ENCODE measurements at regions of chr5 and their contacts with region 1.

Region 1: DNA sequence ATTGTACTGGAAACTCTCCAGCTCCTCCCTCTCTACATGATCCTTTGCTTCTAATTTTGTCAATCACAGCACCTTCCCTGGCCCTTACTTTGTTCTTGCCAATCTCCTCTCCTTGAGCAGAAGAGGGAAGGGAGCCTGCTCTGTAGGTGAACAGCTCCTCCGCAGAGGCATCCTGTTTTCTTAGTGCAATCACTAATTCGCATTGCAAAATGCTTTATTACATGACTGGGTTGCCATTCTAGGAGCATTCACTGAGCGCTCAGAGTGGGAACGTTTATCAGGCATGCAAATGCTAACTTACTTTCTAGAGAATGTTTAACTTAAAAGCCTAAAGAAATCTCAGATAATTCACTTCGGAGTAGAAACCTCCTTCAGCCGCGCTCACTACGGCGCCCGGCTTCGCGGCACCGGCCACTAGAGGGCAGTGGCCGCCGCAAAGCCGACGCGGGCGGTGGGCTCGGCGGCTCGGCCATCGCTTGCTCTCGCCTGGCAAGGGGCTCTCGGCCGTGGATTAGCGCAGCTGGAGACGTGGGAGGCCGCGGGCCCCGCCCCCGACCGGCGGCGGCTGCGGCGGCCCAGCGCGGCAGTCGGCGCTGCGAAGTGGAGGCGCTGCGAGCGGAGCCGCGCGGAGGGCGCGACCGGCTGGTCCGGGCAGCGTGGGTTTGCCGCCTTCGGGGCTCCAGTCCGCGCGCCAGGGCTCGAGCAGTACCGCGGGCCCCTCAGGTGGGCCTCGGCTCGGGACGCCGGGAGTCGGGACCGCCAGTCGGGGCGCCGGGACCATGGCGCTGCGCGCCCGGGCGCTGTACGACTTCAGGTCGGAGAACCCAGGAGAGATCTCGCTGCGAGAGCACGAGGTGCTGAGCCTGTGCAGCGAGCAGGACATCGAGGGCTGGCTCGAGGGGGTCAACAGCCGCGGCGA is at the start of gene SNX18:
- DNase-seq: peak; percentile 94
- ATAC-seq: peak; percentile 91
- H3K4me3 Mint-ChIP-seq: peak within 1 kb of the TSS; percentile 87
- H3K27ac Mint-ChIP-seq: peak within 1 kb of the TSS; percentile 40
- H3K4me1 Mint-ChIP-seq: peaks cover 35% of the 10 kb centered on the region
- H3K27me3 Mint-ChIP-seq: peaks cover 16% of the 10 kb centered on the region
- total RNA-seq, gene SNX18: 35.2 to 45.3 TPM

Region 2: DNA sequence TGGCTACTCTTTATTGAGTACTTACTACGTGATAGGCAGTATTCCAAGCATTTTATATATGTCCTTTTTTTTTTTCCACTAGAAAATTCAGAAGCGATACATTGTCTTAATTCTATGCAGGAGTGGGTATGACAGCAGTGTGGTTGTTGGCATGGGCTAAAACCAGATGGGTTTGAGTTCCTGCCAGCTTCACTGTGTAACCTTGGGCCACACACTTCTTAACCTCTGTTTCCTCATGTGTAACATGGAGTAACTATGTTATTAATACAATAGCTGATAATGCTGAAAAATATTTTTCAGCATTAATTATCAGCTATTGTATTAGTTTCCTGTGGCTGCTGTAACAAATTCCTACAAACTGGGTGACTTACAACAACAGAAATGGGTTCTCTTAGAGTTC is 12.1 kb after region 1 on chr5:
- CTCF ChIA-PET with region 1: interaction called, 10 read pairs
- DNase-seq: no peak
- ATAC-seq: no peak
- H3K4me3 Mint-ChIP-seq: no peak overlapping the region
- H3K27ac Mint-ChIP-seq: no peak overlapping the region
- H3K4me1 Mint-ChIP-seq: peaks cover 27% of the 10 kb centered on the region
- H3K27me3 Mint-ChIP-seq: no peaks in the 10 kb centered on the region

Region 3: GRCh38 chr5:54719384-54720283 is 202.2 kb after region 1 on chr5:
- CTCF ChIA-PET with region 1: interaction called, 18 read pairs
- DNase-seq: no peak
- ATAC-seq: peak; percentile 31
- H3K4me3 Mint-ChIP-seq: no peak overlapping the region
- H3K27ac Mint-ChIP-seq: peak overlapping the region; percentile 54
- H3K4me1 Mint-ChIP-seq: peaks cover 39% of the 10 kb centered on the region
- H3K27me3 Mint-ChIP-seq: no peaks in the 10 kb centered on the region

Region 4: DNA sequence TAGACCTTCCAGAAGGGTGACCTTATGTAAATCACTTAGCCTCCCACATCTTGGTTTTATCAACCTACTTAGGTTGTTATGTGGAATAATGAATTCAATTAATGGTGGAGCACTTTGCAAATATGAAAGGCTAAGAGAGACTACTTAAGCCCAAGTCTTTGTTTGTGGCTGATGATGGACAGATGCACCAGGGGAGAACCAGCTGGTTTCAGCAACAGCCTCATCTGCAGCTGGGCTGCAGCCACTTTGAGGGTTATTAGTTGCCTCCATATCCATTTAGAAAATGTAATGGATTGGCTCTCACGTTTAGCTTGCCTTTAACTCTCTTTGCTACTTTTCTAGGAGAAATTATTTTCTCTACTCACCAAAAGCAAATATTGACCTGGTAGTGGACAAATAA is 321.4 kb after region 1 on chr5:
- CTCF ChIA-PET with region 1: interaction called, 131 read pairs
- DNase-seq: no peak
- ATAC-seq: no peak
- H3K4me3 Mint-ChIP-seq: no peak overlapping the region
- H3K27ac Mint-ChIP-seq: no peak overlapping the region
- H3K4me1 Mint-ChIP-seq: peaks cover 11% of the 10 kb centered on the region
- H3K27me3 Mint-ChIP-seq: peaks cover 5% of the 10 kb centered on the region

Region 5: DNA sequence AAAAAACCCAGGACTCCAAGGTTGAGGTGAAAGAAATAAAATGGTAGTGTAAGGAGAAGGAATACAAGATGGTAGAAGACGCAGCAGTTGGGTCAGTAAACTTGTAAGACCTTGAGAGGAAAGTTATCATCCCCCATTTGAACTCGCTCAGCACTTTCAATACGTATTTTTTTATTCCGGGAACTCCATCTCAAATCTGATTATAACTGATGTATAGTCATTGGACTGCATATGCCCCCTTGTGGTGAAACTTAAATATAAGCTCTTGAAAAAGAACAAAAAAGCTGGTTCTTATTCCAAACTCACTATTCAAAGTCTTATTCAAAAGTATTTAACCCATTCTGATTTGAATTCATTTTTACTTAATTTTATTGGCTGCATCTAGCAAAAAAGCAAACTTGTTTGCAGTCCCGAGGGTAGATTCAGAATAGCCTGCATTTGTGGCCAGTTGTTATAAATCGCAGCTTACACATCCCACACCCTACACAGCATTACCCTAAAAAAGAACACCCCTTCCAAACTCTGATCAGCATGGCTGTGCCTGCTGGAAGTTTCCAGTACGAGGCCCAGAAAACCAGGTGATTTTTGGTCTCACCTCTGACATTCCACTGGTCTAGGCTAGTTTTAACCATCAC is 350.0 kb after region 1 on chr5:
- CTCF ChIA-PET with region 1: interaction called, 70 read pairs
- DNase-seq: no peak
- ATAC-seq: peak; percentile 60
- H3K4me3 Mint-ChIP-seq: no peak overlapping the region
- H3K27ac Mint-ChIP-seq: no peak overlapping the region
- H3K4me1 Mint-ChIP-seq: peaks cover 20% of the 10 kb centered on the region
- H3K27me3 Mint-ChIP-seq: peaks cover 71% of the 10 kb centered on the region

Region 6: DNA sequence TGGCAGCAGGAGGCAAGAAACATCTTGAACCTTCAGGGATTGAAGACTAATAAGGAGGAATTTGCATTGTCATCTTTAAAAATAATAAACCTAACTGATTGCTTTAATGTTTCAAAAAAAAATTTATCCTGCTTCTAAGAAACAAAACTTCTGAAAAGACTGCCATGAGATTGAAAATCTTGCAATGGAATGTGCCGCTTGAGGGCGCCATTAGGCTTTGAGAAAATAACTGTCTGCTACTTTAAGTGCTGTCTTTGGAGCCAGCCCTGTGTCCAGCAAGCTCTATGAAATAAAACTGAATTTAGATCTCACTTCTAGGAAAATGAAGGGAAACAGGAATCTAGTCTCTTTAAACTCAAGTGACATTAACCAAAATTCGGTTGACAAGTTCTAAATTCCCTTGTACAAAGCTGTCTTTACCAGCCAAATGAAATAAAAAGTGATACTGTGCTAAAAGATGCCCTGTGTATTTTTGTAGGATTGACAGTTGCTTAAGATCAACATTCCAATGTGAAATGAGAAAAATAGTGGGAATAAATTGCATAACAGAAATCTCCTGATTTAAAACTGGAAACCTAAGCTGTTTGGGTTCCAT is 388.6 kb after region 1 on chr5:
- CTCF ChIA-PET with region 1: interaction called, 16 read pairs
- DNase-seq: peak; percentile 85
- ATAC-seq: no peak
- H3K4me3 Mint-ChIP-seq: no peak overlapping the region
- H3K27ac Mint-ChIP-seq: no peak overlapping the region
- H3K4me1 Mint-ChIP-seq: peaks cover 66% of the 10 kb centered on the region
- H3K27me3 Mint-ChIP-seq: peaks cover 26% of the 10 kb centered on the region

Region 7: DNA sequence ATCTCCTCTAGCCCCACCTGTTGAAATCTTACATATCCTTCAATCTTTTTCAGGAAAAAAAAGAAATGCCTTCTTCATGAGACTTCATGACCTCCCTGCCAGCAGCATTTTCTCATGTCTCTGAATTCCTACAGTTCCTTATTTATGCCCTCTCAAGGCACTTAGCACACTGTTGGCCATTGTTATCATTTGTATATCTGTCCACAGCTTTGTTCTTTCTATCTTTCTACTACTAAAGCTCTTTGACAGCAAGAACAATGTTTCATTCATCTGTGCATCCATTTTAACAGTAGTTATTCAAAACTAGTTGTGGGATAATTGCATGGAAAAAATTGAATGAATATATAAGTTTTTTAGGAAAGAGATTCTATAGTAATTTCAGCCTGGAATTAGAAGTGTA is 564.1 kb after region 1 on chr5:
- CTCF ChIA-PET with region 1: no interaction called
- DNase-seq: no peak
- ATAC-seq: no peak
- H3K4me3 Mint-ChIP-seq: no peak overlapping the region
- H3K27ac Mint-ChIP-seq: no peak overlapping the region
- H3K4me1 Mint-ChIP-seq: no peaks in the 10 kb centered on the region
- H3K27me3 Mint-ChIP-seq: no peaks in the 10 kb centered on the region

Measured in activated CD8-positive, alpha-beta memory T cell treated with anti-CD3 and anti-CD28 coated beads, Interleukin-2, amount 10 ng/mL, durations not matched to agents 7 days and 5 days (primary cell).